ENCODE measurements at regions of chr15 and their contacts with region 1.

Region 1: GRCh38 chr15:93974804-93975481 is 256.4 kb upstream of the MCTP2 start:
- DNase-seq: no peak
- H3K4me3 ChIP-seq: no peak overlapping the region
- H3K27ac ChIP-seq: no peak overlapping the region
- H3K4me1 ChIP-seq: no peaks in the 10 kb centered on the region
- H3K27me3 ChIP-seq: no peaks in the 10 kb centered on the region
- CTCF ChIP-seq: peak; percentile 28

Region 2: GRCh38 chr15:93030430-93031105 is 944.4 kb before region 1 on chr15:
- intact Hi-C with region 1: loop called (anchors 10 kb)
- DNase-seq: peak; percentile 73
- H3K4me3 ChIP-seq: no peak overlapping the region
- H3K27ac ChIP-seq: peak overlapping the region; percentile 70
- H3K4me1 ChIP-seq: peaks cover 7% of the 10 kb centered on the region
- H3K27me3 ChIP-seq: no peaks in the 10 kb centered on the region
- CTCF ChIP-seq: peak; percentile 82

Region 3: DNA sequence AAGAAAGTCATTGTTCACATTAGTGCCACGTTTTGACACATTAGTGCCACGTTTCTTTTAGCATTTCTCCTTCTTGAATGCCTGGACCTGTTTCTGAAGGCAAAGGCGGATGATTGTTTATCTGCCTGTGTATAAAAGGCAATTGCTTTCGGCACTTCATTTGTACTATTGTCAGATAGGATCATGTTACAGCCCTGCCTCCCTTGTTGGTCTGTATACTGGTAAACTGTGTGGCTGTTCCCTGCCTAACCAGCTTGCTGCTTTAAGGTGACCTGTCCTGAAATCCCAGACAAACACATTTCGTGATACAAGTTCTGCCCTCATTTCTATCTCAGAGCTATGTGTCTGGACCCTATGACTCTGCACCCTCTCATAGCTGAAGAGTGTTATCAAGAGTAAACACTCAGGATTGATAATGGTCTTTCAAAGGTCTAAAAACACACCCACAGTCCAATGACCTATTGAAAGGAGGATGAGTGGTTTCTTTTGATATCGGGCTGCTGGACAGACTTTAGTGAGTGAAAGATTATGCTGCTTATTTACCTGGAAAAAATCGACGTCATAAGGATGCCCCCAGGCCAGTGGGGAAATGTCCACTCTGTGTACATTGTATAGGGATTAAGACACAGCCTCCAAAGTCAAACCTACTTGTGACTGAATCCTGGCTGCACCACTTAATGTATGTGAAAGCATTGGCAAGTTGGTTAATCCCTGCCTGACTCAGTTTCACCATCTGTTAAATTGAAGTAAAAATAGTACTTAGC is 19.8 kb before region 1 on chr15:
- intact Hi-C with region 1: no loop called
- DNase-seq: no peak
- H3K4me3 ChIP-seq: no peak overlapping the region
- H3K27ac ChIP-seq: no peak overlapping the region
- H3K4me1 ChIP-seq: no peaks in the 10 kb centered on the region
- H3K27me3 ChIP-seq: no peaks in the 10 kb centered on the region
- CTCF ChIP-seq: no peak